ENCODE measurements at regions of chr16 and their contacts with region 1.

Region 1: GRCh38 chr16:84062734-84063640 is 20.4 kb upstream of the SLC38A8 start:
- DNase-seq: peak; percentile 46
- ATAC-seq: peak; percentile 47
- H3K4me3 Mint-ChIP-seq: no peak overlapping the region
- H3K27ac Mint-ChIP-seq: no peak overlapping the region
- H3K4me1 Mint-ChIP-seq: no peaks in the 10 kb centered on the region
- H3K27me3 Mint-ChIP-seq: no peaks in the 10 kb centered on the region
- CTCF ChIP-seq: peak; percentile 48

Region 2: DNA sequence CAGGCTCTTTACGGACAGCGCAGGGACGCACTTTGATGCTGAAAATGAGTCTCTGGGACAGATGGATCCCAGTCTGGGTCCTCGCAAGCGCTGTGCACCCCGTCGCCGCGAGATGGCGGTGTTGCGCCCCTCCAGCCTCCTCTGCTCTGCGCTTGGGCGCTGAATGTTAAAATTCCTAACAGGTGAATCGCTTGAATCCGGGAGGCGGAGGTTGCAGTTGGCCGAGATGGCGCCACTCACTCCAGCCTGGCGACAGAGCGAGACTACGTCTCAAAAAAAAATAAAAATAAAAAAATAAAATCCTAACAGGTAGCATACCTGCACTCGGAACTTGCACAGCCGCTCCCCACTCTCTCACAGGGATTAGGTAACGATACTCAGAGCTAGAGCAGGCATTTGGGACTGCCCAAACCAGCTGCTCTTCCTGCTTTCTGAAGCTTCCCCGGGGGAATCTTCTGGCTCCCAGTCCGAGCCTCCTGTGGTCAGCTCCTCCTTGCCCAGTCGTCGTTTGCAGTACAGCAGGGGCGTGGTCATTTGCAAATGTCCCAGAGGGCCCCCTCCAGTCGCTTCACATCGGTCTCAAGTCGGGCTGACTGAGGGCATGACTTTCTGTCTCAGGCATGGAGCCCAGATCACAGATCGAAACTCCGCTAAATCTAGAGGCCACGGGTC is 136.1 kb before region 1 on chr16:
- CTCF ChIA-PET with region 1: interaction called, 5 read pairs
- POLR2A ChIA-PET with region 1: no interaction called
- intact Hi-C with region 1: loop called (anchors 10 kb)
- DNase-seq: peak; percentile 56
- ATAC-seq: peak; percentile 83
- H3K4me3 Mint-ChIP-seq: no peak overlapping the region
- H3K27ac Mint-ChIP-seq: no peak overlapping the region
- H3K4me1 Mint-ChIP-seq: peaks cover 5% of the 10 kb centered on the region
- H3K27me3 Mint-ChIP-seq: no peaks in the 10 kb centered on the region
- CTCF ChIP-seq: no peak

Region 3: GRCh38 chr16:84136331-84137125 is 73.5 kb after region 1 on chr16:
- CTCF ChIA-PET with region 1: no interaction called
- POLR2A ChIA-PET with region 1: no interaction called
- intact Hi-C with region 1: no loop called
- DNase-seq: no peak
- ATAC-seq: no peak
- H3K4me3 Mint-ChIP-seq: no peak overlapping the region
- H3K27ac Mint-ChIP-seq: no peak overlapping the region
- H3K4me1 Mint-ChIP-seq: peaks cover 29% of the 10 kb centered on the region
- H3K27me3 Mint-ChIP-seq: no peaks in the 10 kb centered on the region
- CTCF ChIP-seq: no peak